ENCODE measurements at regions of chr12 and their contacts with region 1.

Region 1: DNA sequence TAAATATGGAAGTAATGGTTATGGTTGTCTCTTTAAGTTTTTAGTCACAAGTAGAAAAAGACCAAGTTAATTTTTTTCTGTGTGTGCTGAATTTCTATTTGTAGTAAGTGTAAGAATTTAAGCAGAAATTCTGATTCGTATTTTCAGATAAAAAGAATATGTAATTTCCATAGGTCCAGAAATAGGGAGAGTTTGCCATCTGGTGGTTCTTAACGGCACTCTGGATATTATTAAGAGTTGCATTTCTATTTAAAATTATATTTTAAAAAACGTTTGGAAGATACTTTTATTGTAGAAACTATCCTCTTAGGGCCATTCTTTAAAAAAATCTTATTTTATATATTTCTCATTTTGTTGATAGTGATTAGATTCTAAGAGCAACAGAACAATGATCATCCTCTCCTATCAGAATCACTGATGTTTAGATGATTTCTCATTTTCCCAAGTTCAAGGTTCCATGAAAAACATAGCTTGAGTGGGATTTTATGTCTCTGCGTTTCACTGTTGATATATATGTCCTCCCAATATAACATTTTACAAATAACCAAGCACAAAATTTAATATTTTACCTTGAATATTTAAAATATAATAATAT is 88.3 kb downstream of the LRRK2 start:
- DNase-seq: peak; percentile 34
- H3K4me3 Mint-ChIP-seq: no peak overlapping the region
- H3K27ac Mint-ChIP-seq: no peak overlapping the region
- H3K4me1 Mint-ChIP-seq: peaks cover 6% of the 10 kb centered on the region
- H3K27me3 Mint-ChIP-seq: no peaks in the 10 kb centered on the region
- CTCF ChIP-seq: peak; percentile 61

Region 2: DNA sequence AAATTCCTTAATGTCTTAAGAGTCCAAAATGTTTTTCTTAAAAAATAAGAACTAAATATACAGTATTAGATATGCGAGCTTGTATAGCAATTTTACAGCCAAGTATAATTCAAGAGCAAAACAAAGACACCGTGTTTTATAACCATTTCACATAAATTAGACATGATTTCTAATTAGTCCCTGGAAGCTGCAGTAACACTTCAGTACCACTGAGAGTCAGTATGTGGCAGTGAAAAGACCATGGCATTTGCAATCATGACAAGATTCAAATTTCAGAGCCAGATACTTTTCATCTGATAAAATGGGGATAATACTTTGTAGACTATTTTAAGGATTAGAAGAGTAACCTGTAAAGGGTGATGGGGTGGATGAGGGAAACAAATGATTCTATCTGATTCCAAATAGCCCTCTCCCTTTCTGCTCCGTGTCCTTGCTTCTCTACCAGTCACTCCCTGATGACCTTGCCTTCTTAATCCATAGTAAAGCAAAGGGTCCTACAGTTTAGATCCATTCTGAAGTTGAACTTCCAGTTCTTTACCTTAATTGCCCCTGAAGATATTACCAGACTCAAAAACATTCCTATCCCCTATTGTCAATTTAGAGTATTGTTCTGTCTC is 548.0 kb before region 1 on chr12:
- CTCF ChIA-PET with region 1: interaction called, 8 read pairs
- POLR2A ChIA-PET with region 1: no interaction called
- intact Hi-C with region 1: loop called (anchors 2 kb)
- DNase-seq: peak; percentile 47
- H3K4me3 Mint-ChIP-seq: no peak overlapping the region
- H3K27ac Mint-ChIP-seq: no peak overlapping the region
- H3K4me1 Mint-ChIP-seq: no peaks in the 10 kb centered on the region
- H3K27me3 Mint-ChIP-seq: no peaks in the 10 kb centered on the region
- CTCF ChIP-seq: peak; percentile 85

Region 3: GRCh38 chr12:40152783-40153383 is 160.2 kb before region 1 on chr12:
- CTCF ChIA-PET with region 1: interaction called, 177 read pairs
- POLR2A ChIA-PET with region 1: interaction called, 11 read pairs
- intact Hi-C with region 1: loop called (anchors 1 kb)
- DNase-seq: peak; percentile 72
- H3K4me3 Mint-ChIP-seq: no peak overlapping the region
- H3K27ac Mint-ChIP-seq: no peak overlapping the region
- H3K4me1 Mint-ChIP-seq: peaks cover 28% of the 10 kb centered on the region
- H3K27me3 Mint-ChIP-seq: no peaks in the 10 kb centered on the region
- CTCF ChIP-seq: peak; percentile 74

Region 4: DNA sequence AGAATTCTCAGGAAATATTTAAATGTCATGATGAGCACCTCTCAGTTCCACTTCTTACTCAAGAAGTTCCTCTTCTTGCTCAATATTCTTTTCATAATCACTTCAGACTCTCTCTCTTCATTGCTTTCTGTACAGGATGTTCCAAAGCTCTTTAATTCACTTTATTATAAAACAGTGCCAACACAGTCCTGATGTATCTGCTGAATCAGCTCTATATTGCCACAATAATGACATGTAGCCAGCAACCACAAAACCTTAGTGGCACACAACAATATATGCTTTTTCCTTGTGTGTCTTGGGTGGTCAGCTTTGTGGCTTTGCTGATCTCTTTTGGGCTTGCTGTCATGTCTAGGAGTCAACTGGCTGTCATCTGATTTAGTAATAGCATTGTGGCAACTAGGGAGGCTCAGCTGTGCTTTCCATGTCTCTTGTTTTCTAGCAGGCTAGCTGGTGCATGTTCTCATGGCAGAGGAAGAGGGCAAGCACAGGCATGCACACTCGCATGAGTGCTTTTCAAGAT is 154.4 kb before region 1 on chr12:
- CTCF ChIA-PET with region 1: interaction called, 177 read pairs
- POLR2A ChIA-PET with region 1: interaction called, 11 read pairs
- intact Hi-C with region 1: loop called (anchors 1 kb)
- DNase-seq: peak; percentile 94
- H3K4me3 Mint-ChIP-seq: peak overlapping the region; percentile 56
- H3K27ac Mint-ChIP-seq: peak overlapping the region; percentile 90
- H3K4me1 Mint-ChIP-seq: peaks cover 21% of the 10 kb centered on the region
- H3K27me3 Mint-ChIP-seq: no peaks in the 10 kb centered on the region
- CTCF ChIP-seq: no peak

Region 5: GRCh38 chr12:40287369-40287975 is 25.6 kb before region 1 on chr12:
- CTCF ChIA-PET with region 1: no interaction called
- POLR2A ChIA-PET with region 1: no interaction called
- intact Hi-C with region 1: no loop called
- DNase-seq: no peak
- H3K4me3 Mint-ChIP-seq: no peak overlapping the region
- H3K27ac Mint-ChIP-seq: no peak overlapping the region
- H3K4me1 Mint-ChIP-seq: no peaks in the 10 kb centered on the region
- H3K27me3 Mint-ChIP-seq: no peaks in the 10 kb centered on the region
- CTCF ChIP-seq: no peak

Region 6: DNA sequence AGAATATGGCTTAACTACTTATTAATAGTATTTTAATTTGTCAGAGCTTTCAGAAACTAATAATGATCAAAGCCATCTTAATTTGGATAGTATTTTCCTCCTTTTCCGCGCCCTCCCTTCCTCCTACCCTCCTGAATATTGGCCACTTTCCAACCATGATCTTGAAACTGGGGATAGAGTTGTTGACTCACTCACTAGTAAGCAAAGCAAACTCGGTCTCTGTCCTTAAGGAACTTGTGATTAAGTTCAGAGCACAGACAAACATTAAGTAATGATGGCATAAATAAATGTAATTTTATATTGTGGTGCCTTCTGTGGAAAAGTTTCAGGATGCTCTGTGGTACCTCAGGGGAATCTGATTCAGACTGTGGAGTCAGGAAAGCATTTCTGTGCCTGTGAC is 12.6 kb before region 1 on chr12:
- CTCF ChIA-PET with region 1: interaction called, 12 read pairs
- POLR2A ChIA-PET with region 1: interaction called, 3 read pairs
- intact Hi-C with region 1: no loop called
- DNase-seq: peak; percentile 66
- H3K4me3 Mint-ChIP-seq: no peak overlapping the region
- H3K27ac Mint-ChIP-seq: no peak overlapping the region
- H3K4me1 Mint-ChIP-seq: peaks cover 5% of the 10 kb centered on the region
- H3K27me3 Mint-ChIP-seq: no peaks in the 10 kb centered on the region
- CTCF ChIP-seq: no peak

Region 7: DNA sequence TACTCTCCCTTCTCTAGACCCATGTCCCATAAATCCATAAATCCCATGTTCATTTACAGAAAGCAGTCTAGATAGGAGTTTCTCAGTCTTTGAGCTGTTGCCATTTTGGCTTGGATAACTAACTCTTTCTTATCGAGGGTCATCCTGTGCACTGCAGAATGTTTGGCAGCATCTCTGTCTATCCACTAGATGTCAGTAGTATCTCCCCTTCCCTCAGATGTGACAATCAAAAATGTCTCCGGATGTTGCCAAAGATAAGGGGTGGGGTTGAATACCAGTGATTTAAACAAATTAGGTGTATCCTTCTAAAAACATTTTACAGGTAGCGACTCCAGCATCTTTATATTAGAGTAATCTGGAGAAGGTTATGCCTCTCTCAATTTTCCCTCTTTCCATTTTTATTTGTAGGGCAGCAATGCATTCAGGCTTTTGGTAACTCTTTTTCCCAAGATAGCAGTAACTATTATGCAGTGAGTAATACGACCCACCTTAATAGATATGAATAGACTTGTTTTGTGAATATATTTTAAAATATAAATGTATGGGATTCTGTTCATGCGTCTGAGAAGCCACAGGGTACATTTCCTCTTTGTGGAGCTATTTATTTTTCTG is 12.4 kb after region 1 on chr12:
- CTCF ChIA-PET with region 1: interaction called, 10 read pairs
- POLR2A ChIA-PET with region 1: no interaction called
- intact Hi-C with region 1: no loop called
- DNase-seq: peak; percentile 60
- H3K4me3 Mint-ChIP-seq: no peak overlapping the region
- H3K27ac Mint-ChIP-seq: no peak overlapping the region
- H3K4me1 Mint-ChIP-seq: no peaks in the 10 kb centered on the region
- H3K27me3 Mint-ChIP-seq: no peaks in the 10 kb centered on the region
- CTCF ChIP-seq: peak; percentile 45

Measured in MCF 10A (cell line).